GM13976 (cell line): ENCODE measurements at regions of chr17 and their contacts with region 1.

Region 1: GRCh38 chr17:12545877-12546513 is 119.7 kb upstream of the MYOCD start:
- DNase-seq: peak; percentile 53
- CTCF ChIP-seq: peak; percentile 76

Region 2: GRCh38 chr17:12365805-12366204 is 180.2 kb before region 1 on chr17:
- in situ Hi-C with region 1: no loop called
- DNase-seq: no peak
- CTCF ChIP-seq: no peak

Region 3: DNA sequence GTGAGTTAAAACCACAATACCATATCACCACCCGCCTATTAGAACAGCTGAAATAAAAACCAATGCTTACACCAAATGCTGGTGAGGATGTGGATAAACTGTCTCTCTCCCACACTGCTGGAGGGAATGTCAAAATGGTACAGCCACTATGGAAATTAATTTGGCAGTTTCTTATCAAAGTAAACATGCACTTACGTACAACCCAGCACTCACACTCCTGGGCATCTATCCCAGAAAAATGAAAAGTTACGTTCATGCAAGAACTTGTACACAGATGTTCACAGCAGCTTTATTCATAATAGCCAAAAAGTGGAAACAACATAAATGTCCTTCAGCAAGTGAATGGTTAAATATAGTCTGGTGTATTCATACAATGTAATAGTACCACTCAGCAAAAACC is 53.5 kb before region 1 on chr17:
- in situ Hi-C with region 1: loop called (anchors 10 kb)
- DNase-seq: no peak
- CTCF ChIP-seq: no peak